Naive thymus-derived CD4-positive, alpha-beta T cell (primary cell): ENCODE measurements at regions of chr1 and their contacts with region 1.

Region 1: DNA sequence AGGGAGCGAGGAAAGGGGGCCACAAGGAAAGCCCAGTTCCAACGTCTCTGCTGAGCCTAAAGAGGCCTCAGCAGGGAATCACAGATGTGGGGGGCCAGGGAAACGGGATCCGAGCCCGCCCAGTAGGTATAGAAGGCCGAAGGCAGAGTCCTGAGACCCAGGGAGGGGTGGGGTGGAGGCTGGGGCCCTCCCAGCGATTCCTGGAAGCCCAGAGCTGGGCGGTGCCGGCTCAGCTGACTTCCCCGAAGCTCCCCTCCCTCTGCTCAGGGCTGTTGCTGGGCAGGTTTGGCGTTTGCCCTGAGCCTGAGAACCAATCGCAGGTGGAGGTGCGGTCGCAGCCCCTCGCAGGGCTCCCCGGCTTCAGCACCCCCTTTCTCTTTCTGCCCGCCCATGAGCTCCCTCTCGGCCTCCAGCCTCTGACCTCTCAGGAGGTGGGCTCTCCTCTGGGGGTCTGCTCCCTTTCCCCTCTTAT is 12.8 kb downstream of the ADAMTSL4 start:
- DNase-seq: peak; percentile 67 to 89 (median 83)
- ATAC-seq: peak; percentile 58
- H3K4me3 ChIP-seq: peak overlapping the region; percentile 95
- H3K4me3 Mint-ChIP-seq: peak overlapping the region; percentile 87 to 99 (median 97)
- H3K27ac ChIP-seq: peak overlapping the region; percentile 97
- H3K27ac Mint-ChIP-seq: peak overlapping the region; percentile 94 to 100 (median 98)
- H3K4me1 ChIP-seq: peaks cover 47 to 57% of the 10 kb centered on the region in 2 donors
- H3K4me1 Mint-ChIP-seq: peaks cover 26 to 59% (median 51%) of the 10 kb centered on the region in 7 donors
- H3K27me3 ChIP-seq: no peaks in the 10 kb centered on the region
- H3K27me3 Mint-ChIP-seq: no peaks in the 10 kb centered on the region

Region 2: DNA sequence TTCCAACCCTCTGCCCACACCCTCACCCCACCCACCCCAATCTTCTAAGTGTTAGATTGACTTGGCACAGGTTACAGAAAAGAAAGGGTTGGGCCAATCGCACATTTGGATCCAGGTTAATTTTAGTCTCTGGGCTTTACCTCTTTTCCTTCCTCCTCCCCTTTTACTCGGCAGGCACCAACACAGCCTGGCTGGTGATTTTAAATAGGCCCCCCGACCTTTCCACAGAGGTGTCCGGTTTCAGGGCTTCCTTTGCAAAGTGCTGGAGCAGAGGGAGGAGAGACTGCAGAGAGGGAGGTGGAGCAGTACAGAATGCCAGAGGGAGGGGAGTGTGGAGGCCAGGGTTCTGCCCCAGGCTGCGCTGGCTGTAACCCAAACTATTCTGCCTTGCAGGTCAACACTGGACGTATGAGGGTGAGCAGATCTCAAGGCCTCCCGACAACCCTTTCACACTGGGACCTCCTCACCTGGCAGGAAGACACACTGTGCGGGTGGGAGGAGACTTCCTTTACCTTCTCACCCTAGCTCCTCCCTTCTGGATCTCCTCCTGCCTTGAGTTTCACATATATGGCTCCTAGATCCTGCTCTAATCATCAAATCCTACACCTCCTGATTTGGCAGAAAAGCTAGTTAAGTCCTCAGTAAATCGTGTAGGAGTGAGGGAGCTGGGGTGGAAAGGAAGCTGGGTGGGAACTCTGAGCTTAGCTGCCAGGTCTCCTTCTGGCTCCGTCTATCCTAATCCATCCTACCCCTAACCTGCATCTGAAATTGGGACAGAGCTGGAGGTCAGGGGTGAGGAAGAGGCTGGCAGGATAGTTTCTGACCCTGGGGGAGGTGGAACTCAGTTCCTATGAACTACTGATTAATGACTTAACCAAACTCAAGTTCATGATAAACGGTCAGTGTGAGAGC is 302.0 kb before region 1 on chr1:
- CTCF ChIA-PET with region 1: interaction called, 3 read pairs
- POLR2A ChIA-PET with region 1: interaction called, 3 read pairs
- intact Hi-C with region 1: loop called (anchors 1 to 2 kb)
- DNase-seq: no peak
- ATAC-seq: no peak
- H3K4me3 ChIP-seq: no peak overlapping the region
- H3K4me3 Mint-ChIP-seq: peak overlapping the region in 1 of 10 donors; percentile 32
- H3K27ac ChIP-seq: no peak overlapping the region
- H3K27ac Mint-ChIP-seq: no peak overlapping the region
- H3K4me1 ChIP-seq: peaks cover 6 to 8% of the 10 kb centered on the region in 2 donors
- H3K4me1 Mint-ChIP-seq: peaks cover 6 to 23% (median 15%) of the 10 kb centered on the region in 7 donors
- H3K27me3 ChIP-seq: peaks cover 0 to 10% of the 10 kb centered on the region in 2 donors
- H3K27me3 Mint-ChIP-seq: peaks cover 13 to 49% (median 26%) of the 10 kb centered on the region in 5 donors

Region 3: DNA sequence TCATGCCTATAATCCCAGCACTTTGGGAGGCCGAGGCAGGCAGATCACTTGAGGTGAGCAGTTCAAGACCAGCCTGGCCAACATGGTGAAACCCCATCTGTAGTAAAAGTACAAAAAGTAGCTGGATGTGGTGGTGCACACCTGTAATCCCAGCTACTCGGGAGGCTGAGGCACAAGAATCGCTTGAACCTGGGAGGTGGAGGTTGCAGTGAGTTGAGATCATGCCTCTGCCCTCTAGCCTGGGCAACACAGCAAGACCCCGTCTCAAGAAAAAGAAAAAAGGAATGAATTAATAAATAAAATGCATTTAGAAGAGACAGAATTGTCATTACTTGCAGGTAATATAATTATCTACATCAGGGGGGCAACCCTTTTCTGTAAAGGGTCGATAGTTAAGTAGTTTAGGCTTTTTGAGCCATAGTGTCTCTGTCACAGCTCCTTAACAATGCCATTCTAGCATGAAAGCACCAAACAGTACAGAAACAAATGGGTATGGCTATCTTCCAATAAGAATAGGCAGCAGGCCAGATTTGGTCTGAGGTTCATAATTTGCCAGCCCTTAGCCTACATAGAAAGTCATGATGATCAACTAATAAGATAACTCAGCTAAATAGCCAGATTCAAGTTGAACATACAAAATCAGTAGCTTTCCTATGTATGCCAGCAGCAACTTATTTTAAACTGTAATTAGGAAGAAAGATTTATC is 141.3 kb before region 1 on chr1:
- CTCF ChIA-PET with region 1: no interaction called
- POLR2A ChIA-PET with region 1: no interaction called
- intact Hi-C with region 1: no loop called
- DNase-seq: no peak
- ATAC-seq: no peak
- H3K4me3 ChIP-seq: no peak overlapping the region
- H3K4me3 Mint-ChIP-seq: no peak overlapping the region
- H3K27ac ChIP-seq: no peak overlapping the region
- H3K27ac Mint-ChIP-seq: peak overlapping the region in 1 of 9 donors; percentile 54
- H3K4me1 ChIP-seq: no peaks in the 10 kb centered on the region
- H3K4me1 Mint-ChIP-seq: peaks cover 4 to 27% (median 17%) of the 10 kb centered on the region in 7 donors
- H3K27me3 ChIP-seq: no peaks in the 10 kb centered on the region
- H3K27me3 Mint-ChIP-seq: no peaks in the 10 kb centered on the region

Region 4: GRCh38 chr1:150486964-150487762 is 74.8 kb before region 1 on chr1 and contains the start of gene TARS2:
- CTCF ChIA-PET with region 1: no interaction called
- POLR2A ChIA-PET with region 1: interaction called, 7 read pairs
- intact Hi-C with region 1: loop called (anchors 2 to 5 kb)
- DNase-seq: peak; percentile 71 to 97 (median 95)
- ATAC-seq: peak; percentile 100
- H3K4me3 ChIP-seq: peak within 1 kb of the TSS; percentile 95
- H3K4me3 Mint-ChIP-seq: peak within 1 kb of the TSS; percentile 91 to 100 (median 96)
- H3K27ac ChIP-seq: peak within 1 kb of the TSS; percentile 83
- H3K27ac Mint-ChIP-seq: peak within 1 kb of the TSS; percentile 92 to 100 (median 99)
- H3K4me1 ChIP-seq: peaks cover 4 to 8% of the 10 kb centered on the region in 2 donors
- H3K4me1 Mint-ChIP-seq: peaks cover 5 to 28% (median 20%) of the 10 kb centered on the region in 7 donors
- H3K27me3 ChIP-seq: no peaks in the 10 kb centered on the region
- H3K27me3 Mint-ChIP-seq: no peaks in the 10 kb centered on the region
- total RNA-seq, gene TARS2: 30.3 to 39.0 (median 36.4) TPM

Region 5: GRCh38 chr1:150507905-150508854 is 53.8 kb before region 1 on chr1 and contains the start of gene ECM1:
- CTCF ChIA-PET with region 1: no interaction called
- POLR2A ChIA-PET with region 1: no interaction called
- intact Hi-C with region 1: no loop called
- DNase-seq: no peak
- ATAC-seq: peak; percentile 64
- H3K4me3 ChIP-seq: no peak within 1 kb of the TSS
- H3K4me3 Mint-ChIP-seq: no peak within 1 kb of the TSS
- H3K27ac ChIP-seq: no peak within 1 kb of the TSS
- H3K27ac Mint-ChIP-seq: peak within 1 kb of the TSS in 3 of 9 donors; percentile 19 to 26 (median 20)
- H3K4me1 ChIP-seq: no peaks in the 10 kb centered on the region
- H3K4me1 Mint-ChIP-seq: peaks cover 0 to 10% (median 0%) of the 10 kb centered on the region in 7 donors
- H3K27me3 ChIP-seq: no peaks in the 10 kb centered on the region
- H3K27me3 Mint-ChIP-seq: no peaks in the 10 kb centered on the region
- total RNA-seq, gene ECM1: 0.29 to 2.4 (median 1.4) TPM

Region 6: DNA sequence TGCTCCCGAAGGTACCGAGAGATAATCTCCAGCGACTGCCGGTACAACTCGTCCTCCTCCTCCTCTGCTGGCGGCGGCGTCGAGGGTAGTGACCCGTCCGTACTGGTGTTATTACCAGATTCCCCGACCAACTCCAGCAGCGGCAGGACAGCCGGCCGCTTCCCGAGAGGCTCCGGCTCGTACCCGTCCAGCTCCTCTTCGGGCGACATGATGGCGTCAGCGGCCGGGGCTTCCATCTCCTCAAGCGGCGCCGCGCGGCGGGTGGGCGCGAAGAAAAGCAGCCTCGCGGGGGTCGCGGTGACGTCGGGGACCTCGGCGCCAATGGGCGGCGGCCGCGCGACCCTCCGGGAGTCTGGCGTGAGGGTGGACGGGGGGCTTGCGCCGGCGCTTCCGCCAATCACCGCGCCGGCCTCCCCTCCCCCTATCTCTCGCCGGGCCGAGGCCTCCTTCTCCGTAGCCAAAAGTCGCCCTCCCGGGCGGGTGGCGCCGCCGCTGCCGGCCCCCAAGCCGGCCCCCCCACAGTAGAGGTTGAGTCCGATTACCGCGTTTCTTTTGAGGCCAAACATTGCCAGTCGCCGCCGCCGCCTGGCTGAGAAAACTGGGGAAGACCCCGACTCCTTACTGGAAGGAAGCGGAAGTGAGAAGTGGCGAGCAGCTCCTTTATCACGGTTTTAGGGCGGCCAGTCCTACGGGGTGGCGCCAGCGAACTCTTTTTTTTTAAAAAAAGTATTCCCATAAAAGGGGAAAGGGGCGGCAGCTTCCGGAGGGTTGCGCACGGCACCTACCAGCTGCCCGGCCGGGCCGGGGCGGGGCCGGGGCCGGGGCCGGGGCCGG is 17.2 kb after region 1 on chr1 and contains the start of gene MCL1:
- CTCF ChIA-PET with region 1: interaction called, 300 read pairs
- POLR2A ChIA-PET with region 1: interaction called, 1,237 read pairs
- intact Hi-C with region 1: loop called (anchors 1 kb)
- DNase-seq: peak; percentile 75 to 88 (median 83)
- ATAC-seq: peak; percentile 90
- H3K4me3 ChIP-seq: peak within 1 kb of the TSS; percentile 95
- H3K4me3 Mint-ChIP-seq: peak within 1 kb of the TSS; percentile 92 to 99 (median 95)
- H3K27ac ChIP-seq: peak within 1 kb of the TSS; percentile 97
- H3K27ac Mint-ChIP-seq: peak within 1 kb of the TSS; percentile 96 to 99 (median 98)
- H3K4me1 ChIP-seq: peaks cover 3 to 15% of the 10 kb centered on the region in 2 donors
- H3K4me1 Mint-ChIP-seq: peaks cover 25 to 39% (median 29%) of the 10 kb centered on the region in 7 donors
- H3K27me3 ChIP-seq: no peaks in the 10 kb centered on the region
- H3K27me3 Mint-ChIP-seq: peaks cover 0 to 7% (median 0%) of the 10 kb centered on the region in 5 donors
- total RNA-seq, gene MCL1: 302 to 1,400 (median 377) TPM

Region 7: DNA sequence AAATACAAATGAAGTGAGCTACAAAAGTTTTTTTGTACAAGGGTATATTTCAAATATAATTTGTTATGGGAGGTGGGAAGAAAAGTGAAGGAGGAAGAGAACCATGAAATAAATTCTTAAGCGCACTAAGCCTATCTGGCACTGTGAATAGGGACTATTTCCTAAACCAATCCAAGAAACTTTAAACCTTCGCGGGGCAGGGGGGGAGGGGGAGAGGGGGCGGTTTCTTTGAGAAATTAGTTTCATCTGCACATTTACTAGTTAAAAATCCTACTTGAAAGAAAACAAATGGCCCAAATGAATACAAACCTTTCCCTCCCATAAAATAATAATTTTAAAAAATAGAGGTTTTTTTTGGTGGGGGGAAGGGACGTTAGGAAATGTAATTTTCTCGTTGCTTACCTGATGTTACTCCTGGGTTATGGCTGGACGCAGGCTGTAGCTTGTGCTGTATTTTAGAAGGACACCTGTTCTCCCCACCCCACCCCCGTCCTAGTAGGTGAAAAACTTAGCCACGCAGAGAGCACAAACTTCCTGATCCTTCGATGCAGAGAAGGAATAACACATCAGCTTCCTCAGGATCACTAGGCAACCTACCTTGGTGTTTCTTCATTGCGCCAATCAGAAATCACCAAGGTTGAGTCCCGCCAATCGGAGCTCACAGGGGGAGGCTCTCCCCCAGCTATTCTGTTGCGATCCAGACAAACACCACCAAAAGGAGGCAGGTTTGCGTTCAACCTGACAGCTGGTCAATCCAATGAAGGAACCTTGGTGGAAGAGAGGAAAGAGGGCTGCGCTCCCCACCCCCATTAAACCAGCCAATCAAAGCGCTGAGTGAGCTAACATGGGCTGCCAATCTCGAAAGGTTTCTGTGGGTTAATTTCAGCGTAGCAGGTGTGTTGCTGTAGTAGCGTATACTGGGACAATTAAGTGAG is 134.8 kb after region 1 on chr1 and contains the start of gene GOLPH3L:
- CTCF ChIA-PET with region 1: interaction called, 5 read pairs
- POLR2A ChIA-PET with region 1: interaction called, 7 read pairs
- intact Hi-C with region 1: loop called (anchors 1 to 5 kb)
- DNase-seq: peak; percentile 46 to 95 (median 92)
- ATAC-seq: peak; percentile 100
- H3K4me3 ChIP-seq: peak within 1 kb of the TSS; percentile 73
- H3K4me3 Mint-ChIP-seq: peak within 1 kb of the TSS; percentile 91 to 100 (median 98)
- H3K27ac ChIP-seq: peak within 1 kb of the TSS; percentile 82
- H3K27ac Mint-ChIP-seq: peak within 1 kb of the TSS; percentile 81 to 99 (median 95)
- H3K4me1 ChIP-seq: peaks cover 4 to 11% of the 10 kb centered on the region in 2 donors
- H3K4me1 Mint-ChIP-seq: peaks cover 13 to 49% (median 42%) of the 10 kb centered on the region in 7 donors
- H3K27me3 ChIP-seq: no peaks in the 10 kb centered on the region
- H3K27me3 Mint-ChIP-seq: peaks cover 0 to 12% (median 0%) of the 10 kb centered on the region in 5 donors
- total RNA-seq, gene GOLPH3L: 8.7 to 32.1 (median 23.6) TPM

Region 8: GRCh38 chr1:150708595-150708994 is 146.6 kb after region 1 on chr1:
- CTCF ChIA-PET with region 1: no interaction called
- POLR2A ChIA-PET with region 1: no interaction called
- intact Hi-C with region 1: no loop called
- DNase-seq: no peak
- ATAC-seq: no peak
- H3K4me3 ChIP-seq: no peak overlapping the region
- H3K4me3 Mint-ChIP-seq: no peak overlapping the region
- H3K27ac ChIP-seq: no peak overlapping the region
- H3K27ac Mint-ChIP-seq: no peak overlapping the region
- H3K4me1 ChIP-seq: no peaks in the 10 kb centered on the region
- H3K4me1 Mint-ChIP-seq: no peaks in the 10 kb centered on the region
- H3K27me3 ChIP-seq: no peaks in the 10 kb centered on the region
- H3K27me3 Mint-ChIP-seq: peaks cover 0 to 36% (median 0%) of the 10 kb centered on the region in 5 donors

Region 9: GRCh38 chr1:150876119-150876454 is 314.1 kb after region 1 on chr1:
- CTCF ChIA-PET with region 1: no interaction called
- POLR2A ChIA-PET with region 1: no interaction called
- intact Hi-C with region 1: loop called in 1 of 2 experiments (anchors 5 kb)
- DNase-seq: no peak
- ATAC-seq: peak; percentile 50
- H3K4me3 ChIP-seq: peak overlapping the region; percentile 68
- H3K4me3 Mint-ChIP-seq: peak overlapping the region; percentile 87 to 96 (median 95)
- H3K27ac ChIP-seq: peak overlapping the region; percentile 83
- H3K27ac Mint-ChIP-seq: peak overlapping the region; percentile 89 to 97 (median 94)
- H3K4me1 ChIP-seq: peaks cover 0 to 19% of the 10 kb centered on the region in 2 donors
- H3K4me1 Mint-ChIP-seq: peaks cover 13 to 45% (median 37%) of the 10 kb centered on the region in 7 donors
- H3K27me3 ChIP-seq: no peaks in the 10 kb centered on the region
- H3K27me3 Mint-ChIP-seq: no peaks in the 10 kb centered on the region

Region 10: DNA sequence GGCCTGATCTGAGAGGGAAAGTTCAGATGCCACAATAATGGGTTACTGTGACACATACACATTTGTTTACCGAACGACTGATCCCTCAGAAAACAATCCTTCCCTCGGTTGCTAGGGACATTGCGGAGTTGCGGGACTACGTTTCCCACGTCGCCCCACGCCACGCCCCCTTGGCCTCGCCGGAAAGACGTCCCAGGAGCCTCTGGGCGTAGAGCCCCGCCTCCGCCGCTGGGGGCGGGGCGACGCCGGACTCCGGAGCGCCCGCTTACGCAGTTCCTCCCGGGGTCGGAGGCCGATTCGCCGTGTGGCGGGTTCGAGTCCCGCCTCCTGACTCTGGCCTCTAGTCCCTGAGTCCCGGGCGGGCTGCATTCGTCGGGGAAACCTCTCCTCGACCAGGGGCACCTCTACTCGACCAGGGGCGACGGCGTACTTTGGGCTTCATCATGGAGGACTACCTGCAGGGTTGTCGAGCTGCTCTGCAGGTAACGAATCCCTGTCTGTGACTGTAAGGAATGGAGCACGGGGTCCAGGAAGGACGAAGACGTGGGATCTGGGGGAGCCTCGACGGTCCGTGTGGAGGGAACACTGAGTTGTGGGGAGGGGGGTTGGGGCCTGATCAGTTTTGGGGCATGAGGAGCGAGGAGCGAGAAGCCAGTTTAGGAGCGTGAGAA is 446.3 kb after region 1 on chr1 and contains the start of gene PRUNE1:
- CTCF ChIA-PET with region 1: no interaction called
- POLR2A ChIA-PET with region 1: no interaction called
- intact Hi-C with region 1: loop called in 1 of 2 experiments (anchors 5 kb)
- DNase-seq: peak; percentile 87 to 98 (median 92)
- ATAC-seq: peak; percentile 96
- H3K4me3 ChIP-seq: peak within 1 kb of the TSS; percentile 88
- H3K4me3 Mint-ChIP-seq: peak within 1 kb of the TSS; percentile 91 to 100 (median 97)
- H3K27ac ChIP-seq: peak within 1 kb of the TSS; percentile 96
- H3K27ac Mint-ChIP-seq: peak within 1 kb of the TSS; percentile 92 to 99 (median 97)
- H3K4me1 ChIP-seq: peaks cover 32 to 45% of the 10 kb centered on the region in 2 donors
- H3K4me1 Mint-ChIP-seq: peaks cover 46 to 84% (median 70%) of the 10 kb centered on the region in 7 donors
- H3K27me3 ChIP-seq: no peaks in the 10 kb centered on the region
- H3K27me3 Mint-ChIP-seq: no peaks in the 10 kb centered on the region
- total RNA-seq, gene PRUNE1: 13.3 to 41.8 (median 17.2) TPM